Dorsolateral prefrontal cortex (tissue), 120 donors: ENCODE measurements at regions of chr2 and their contacts with region 1.

Region 1: GRCh38 chr2:42810121-42810970 is 18.0 kb upstream of the HAAO start:
- DNase-seq: peak; percentile 91 to 97 (median 94)
- H3K4me3 ChIP-seq: peak overlapping the region; percentile 56 to 92 (median 79)
- H3K27ac ChIP-seq: peak overlapping the region; percentile 93 to 100 (median 100)
- H3K27me3 ChIP-seq: no peaks in the 10 kb centered on the region
- CTCF ChIP-seq: peak in 11 of 56 donors; percentile 1 to 35 (median 7)

Region 2: DNA sequence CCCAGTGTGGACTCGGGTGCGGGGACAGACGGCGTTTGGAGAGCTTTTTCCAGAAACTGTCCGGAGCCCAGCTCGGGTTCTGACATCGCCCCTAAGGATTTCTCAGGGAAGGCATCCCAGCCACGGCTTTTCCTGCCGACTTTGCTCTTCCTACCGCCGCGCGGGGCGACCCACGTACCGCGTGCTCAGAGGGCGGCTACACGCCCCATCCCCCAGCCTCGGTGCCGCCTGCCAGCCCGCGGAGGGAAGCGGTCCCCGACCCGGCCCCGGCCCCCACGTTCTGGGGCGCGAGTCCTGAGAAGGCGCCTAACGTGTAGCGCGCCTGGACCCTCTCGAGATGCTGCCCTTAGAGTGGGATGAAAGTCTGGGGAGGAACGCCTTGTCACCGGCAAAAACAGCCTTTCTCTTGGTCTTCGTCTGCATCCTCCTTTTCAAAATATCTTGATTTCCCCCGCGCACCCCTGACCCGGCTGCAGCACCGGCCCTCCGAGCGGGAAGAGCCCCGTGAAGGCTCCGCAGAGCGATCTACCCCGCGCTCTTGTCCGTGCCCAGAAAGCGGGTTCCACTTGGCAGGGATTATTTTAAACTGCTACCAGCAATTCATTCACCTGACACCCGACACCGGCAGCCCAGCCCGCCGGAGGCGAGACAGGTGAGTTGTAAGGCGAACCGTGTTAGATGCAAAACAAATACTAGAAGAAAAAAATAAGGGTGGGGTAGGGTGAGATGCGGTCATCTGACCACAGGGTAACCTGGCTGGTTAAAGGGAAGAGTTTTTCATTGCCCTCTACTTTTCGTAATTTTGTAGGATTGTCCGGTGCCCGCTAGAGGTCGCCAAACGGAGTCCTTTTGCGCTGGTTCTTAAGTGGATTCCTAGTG is 315.8 kb before region 1 on chr2:
- intact Hi-C with region 1: loop called in 1 of 2 experiments (anchors 10 kb)
- DNase-seq: peak; percentile 46 to 77 (median 68)
- H3K4me3 ChIP-seq: peak overlapping the region; percentile 44 to 85 (median 65)
- H3K27ac ChIP-seq: peak overlapping the region in 40 of 59 donors; percentile 8 to 75 (median 48)
- H3K27me3 ChIP-seq: peaks cover 0 to 35% (median 11%) of the 10 kb centered on the region in 45 donors
- CTCF ChIP-seq: peak; percentile 66 to 94 (median 85)

Region 3: GRCh38 chr2:42568401-42569115 is 241.8 kb before region 1 on chr2 and contains the start of gene MTA3:
- intact Hi-C with region 1: loop called in 1 of 2 experiments (anchors 10 kb)
- DNase-seq: peak in 9 of 10 donors; percentile 31 to 81 (median 63)
- H3K4me3 ChIP-seq: peak within 1 kb of the TSS; percentile 56 to 97 (median 82)
- H3K27ac ChIP-seq: peak within 1 kb of the TSS; percentile 53 to 95 (median 87)
- H3K27me3 ChIP-seq: no peaks in the 10 kb centered on the region
- CTCF ChIP-seq: no peak
- total RNA-seq, gene MTA3: 45.5 to 111 (median 79.6) TPM

Region 4: DNA sequence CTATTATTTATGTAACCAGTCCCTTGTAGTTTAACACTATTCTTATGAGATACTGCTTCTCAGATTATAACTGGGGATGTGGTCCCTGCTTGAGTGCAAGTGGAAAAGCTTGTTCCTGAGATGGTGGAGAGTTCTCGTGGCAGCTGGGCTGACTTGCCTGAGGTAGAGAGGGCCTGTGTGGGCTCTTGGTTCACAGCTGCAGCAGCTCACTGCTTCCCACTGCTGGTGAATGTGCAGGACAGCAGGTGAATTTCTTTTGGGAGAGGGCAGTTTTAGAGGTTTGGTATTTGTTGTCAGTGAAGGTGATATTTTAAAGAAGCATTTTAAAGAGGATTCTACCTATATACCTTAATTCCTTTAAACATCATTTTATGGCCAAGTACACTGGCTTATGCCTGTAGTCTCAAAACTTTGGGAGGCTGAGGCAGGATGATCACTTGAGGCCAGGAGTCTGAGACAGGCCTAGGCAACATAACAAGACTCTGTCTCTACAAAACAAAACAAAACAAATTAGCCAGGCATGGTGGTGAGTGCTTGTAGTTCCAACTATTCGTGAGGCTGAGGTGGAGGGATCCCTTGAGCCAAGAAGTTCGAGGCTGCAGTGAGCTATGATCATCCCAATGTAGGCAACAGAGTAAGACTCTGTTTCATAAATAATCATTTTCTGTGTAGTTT is 147.1 kb before region 1 on chr2:
- intact Hi-C with region 1: loop called in 1 of 2 experiments (anchors 5 kb)
- DNase-seq: peak; percentile 25 to 75 (median 64)
- H3K4me3 ChIP-seq: no peak overlapping the region
- H3K27ac ChIP-seq: peak overlapping the region in 7 of 59 donors; percentile 12 to 52 (median 14)
- H3K27me3 ChIP-seq: no peaks in the 10 kb centered on the region
- CTCF ChIP-seq: peak; percentile 77 to 98 (median 94)

Region 5: GRCh38 chr2:42754021-42754775 is 56.1 kb before region 1 on chr2:
- intact Hi-C with region 1: loop called in 1 of 2 experiments (anchors 5 kb)
- DNase-seq: peak in 8 of 10 donors; percentile 40 to 78 (median 64)
- H3K4me3 ChIP-seq: no peak overlapping the region
- H3K27ac ChIP-seq: peak overlapping the region in 58 of 59 donors; percentile 7 to 97 (median 83)
- H3K27me3 ChIP-seq: no peaks in the 10 kb centered on the region
- CTCF ChIP-seq: no peak

Region 6: GRCh38 chr2:42987112-42987922 is 177.0 kb after region 1 on chr2:
- intact Hi-C with region 1: no loop called
- DNase-seq: peak in 1 of 10 donors; percentile 11
- H3K4me3 ChIP-seq: no peak overlapping the region
- H3K27ac ChIP-seq: no peak overlapping the region
- H3K27me3 ChIP-seq: no peaks in the 10 kb centered on the region
- CTCF ChIP-seq: no peak

Region 7: GRCh38 chr2:43105586-43106558 is 295.5 kb after region 1 on chr2:
- intact Hi-C with region 1: no loop called
- DNase-seq: no peak
- H3K4me3 ChIP-seq: no peak overlapping the region
- H3K27ac ChIP-seq: peak overlapping the region in 51 of 59 donors; percentile 3 to 85 (median 64)
- H3K27me3 ChIP-seq: no peaks in the 10 kb centered on the region
- CTCF ChIP-seq: peak in 1 of 56 donors; percentile 16

Region 8: GRCh38 chr2:43226558-43226954 is 416.2 kb after region 1 on chr2 and contains the start of gene ZFP36L2:
- intact Hi-C with region 1: loop called in 1 of 2 experiments (anchors 5 kb)
- DNase-seq: peak; percentile 71 to 98 (median 94)
- H3K4me3 ChIP-seq: peak within 1 kb of the TSS; percentile 51 to 93 (median 79)
- H3K27ac ChIP-seq: peak within 1 kb of the TSS; percentile 89 to 100 (median 98)
- H3K27me3 ChIP-seq: peaks cover 0 to 19% (median 0%) of the 10 kb centered on the region in 45 donors
- CTCF ChIP-seq: peak in 8 of 56 donors; percentile 4 to 26 (median 18)
- total RNA-seq, gene ZFP36L2: 13.0 to 86.0 (median 32.4) TPM

Region 9: DNA sequence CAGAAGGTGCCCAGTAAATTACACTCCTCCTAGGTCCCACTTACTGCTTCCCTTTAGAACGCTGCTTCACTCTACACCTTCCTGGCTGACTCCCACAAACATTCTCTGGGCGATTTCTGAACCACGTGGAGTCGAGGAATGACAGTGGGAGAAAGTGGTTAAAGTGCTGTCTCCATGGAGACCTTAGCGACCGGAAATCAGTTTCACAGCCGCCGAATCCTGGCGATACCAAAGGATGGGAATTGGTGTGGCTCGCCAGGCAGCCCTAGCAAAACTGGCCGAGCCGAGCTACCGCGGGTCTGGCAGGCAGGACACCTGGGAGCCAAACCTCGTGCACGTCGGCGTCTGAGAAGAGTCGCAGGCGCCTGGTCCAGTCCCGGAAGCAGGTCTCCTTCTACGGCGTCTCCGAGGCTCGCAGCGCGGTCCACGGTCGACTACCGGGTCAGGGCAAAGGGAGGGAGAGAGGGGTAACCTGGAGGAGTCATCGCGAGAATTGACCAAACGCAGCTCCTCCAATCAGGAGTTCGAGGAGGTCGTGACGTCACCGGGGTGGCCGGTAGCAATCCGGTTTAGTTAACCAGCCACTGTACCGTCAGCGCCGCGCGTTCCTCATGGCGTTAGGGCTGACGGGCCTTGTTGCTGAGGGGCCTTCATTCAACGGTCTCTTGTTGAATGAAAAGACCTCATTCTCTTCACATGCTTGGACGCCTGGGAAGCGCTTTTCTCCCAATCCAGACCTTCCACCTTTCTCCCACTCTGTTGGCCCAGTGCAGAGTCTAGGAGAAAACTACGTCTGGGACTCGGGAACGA is 785.5 kb after region 1 on chr2 and contains the start of gene THADA:
- intact Hi-C with region 1: loop called in 1 of 2 experiments (anchors 10 kb)
- DNase-seq: peak; percentile 99 to 100 (median 99)
- H3K4me3 ChIP-seq: peak within 1 kb of the TSS; percentile 61 to 99 (median 87)
- H3K27ac ChIP-seq: peak within 1 kb of the TSS; percentile 1 to 96 (median 89)
- H3K27me3 ChIP-seq: no peaks in the 10 kb centered on the region
- CTCF ChIP-seq: peak in 21 of 56 donors; percentile 6 to 49 (median 27)
- total RNA-seq, gene THADA: 15.6 to 41.4 (median 26.0) TPM